ENCODE measurements at regions of chr11 and their contacts with region 1.

Region 1: GRCh38 chr11:58006940-58007339 is 16.7 kb upstream of the OR9Q1 start:
- DNase-seq: peak; percentile 76
- H3K4me3 ChIP-seq: no peak overlapping the region
- H3K27ac ChIP-seq: peak overlapping the region; percentile 33
- H3K4me1 ChIP-seq: peaks cover 48% of the 10 kb centered on the region
- H3K27me3 ChIP-seq: no peaks in the 10 kb centered on the region
- CTCF ChIP-seq: no peak
- POLR2A ChIP-seq: no peak

Region 2: GRCh38 chr11:57667736-57668435 is 339.1 kb before region 1 on chr11 and contains the start of gene ZDHHC5:
- CTCF ChIA-PET with region 1: no interaction called
- POLR2A ChIA-PET with region 1: no interaction called
- dilution Hi-C with region 1: no loop called
- intact Hi-C with region 1: loop called (anchors 5 kb)
- DNase-seq: peak; percentile 100
- H3K4me3 ChIP-seq: peak within 1 kb of the TSS; percentile 67 to 95 (median 77)
- H3K27ac ChIP-seq: peak within 1 kb of the TSS; percentile 98
- H3K4me1 ChIP-seq: peaks cover 15% of the 10 kb centered on the region
- H3K27me3 ChIP-seq: no peaks in the 10 kb centered on the region
- CTCF ChIP-seq: peak; percentile 53 to 56
- POLR2A ChIP-seq: peak; percentile 93
- total RNA-seq, gene ZDHHC5: 67.4 and 74.0 TPM in 2 replicates

Region 3: DNA sequence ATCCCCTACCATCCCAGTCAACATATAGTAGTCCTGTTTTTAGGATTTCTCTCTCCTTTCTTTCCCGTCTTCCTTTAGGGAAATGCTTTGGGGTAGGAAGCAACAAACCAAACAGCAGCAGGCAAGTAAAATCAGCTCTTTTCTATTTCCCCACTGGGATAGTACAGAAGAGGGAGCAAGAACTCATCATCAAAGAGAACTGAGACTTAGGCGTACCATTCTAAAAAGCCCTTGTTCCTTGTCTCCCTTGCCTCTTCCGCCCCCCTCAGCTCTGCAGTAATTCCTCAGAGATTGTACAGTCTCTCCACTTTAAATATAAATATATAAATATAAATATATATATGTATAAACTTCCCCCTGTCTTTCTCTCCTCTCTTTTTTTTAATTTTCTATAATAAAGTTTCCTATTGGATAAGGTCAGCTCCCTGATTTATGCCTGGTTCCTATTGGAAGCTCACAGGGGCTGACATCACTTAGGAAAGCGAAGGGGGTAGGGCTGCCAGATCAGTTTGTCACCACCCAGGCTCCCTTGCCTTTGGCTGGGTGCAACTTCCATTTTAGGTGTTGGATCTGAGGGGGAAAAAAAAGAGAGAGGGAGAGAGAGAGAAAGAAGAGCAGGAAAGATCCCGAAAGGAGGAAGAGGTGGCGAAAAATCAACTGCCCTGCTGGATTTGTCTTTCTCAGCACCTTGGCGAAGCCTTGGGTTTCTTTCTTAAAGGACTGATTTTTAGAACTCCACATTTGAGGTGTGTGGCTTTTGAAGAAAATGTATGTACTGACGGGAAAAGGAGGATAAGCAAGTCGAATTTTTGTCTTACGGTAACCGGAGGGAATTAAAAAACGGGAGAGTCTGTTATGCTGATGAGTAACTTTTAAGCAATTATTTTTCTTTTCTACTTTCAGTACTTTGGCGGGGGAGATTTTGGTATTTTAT is 245.4 kb before region 1 on chr11 and contains the start of gene CTNND1:
- CTCF ChIA-PET with region 1: no interaction called
- POLR2A ChIA-PET with region 1: no interaction called
- dilution Hi-C with region 1: no loop called
- intact Hi-C with region 1: loop called (anchors 5 kb)
- DNase-seq: peak; percentile 97
- H3K4me3 ChIP-seq: peak within 1 kb of the TSS; percentile 68 to 98 (median 83)
- H3K27ac ChIP-seq: peak within 1 kb of the TSS; percentile 89
- H3K4me1 ChIP-seq: peaks cover 26% of the 10 kb centered on the region
- H3K27me3 ChIP-seq: no peaks in the 10 kb centered on the region
- CTCF ChIP-seq: no peak
- POLR2A ChIP-seq: peak; percentile 80
- total RNA-seq, gene CTNND1: 268 and 285 TPM in 2 replicates

Region 4: GRCh38 chr11:57842873-57843272 is 164.1 kb before region 1 on chr11:
- CTCF ChIA-PET with region 1: no interaction called
- POLR2A ChIA-PET with region 1: no interaction called
- dilution Hi-C with region 1: no loop called
- intact Hi-C with region 1: loop called (anchors 1 kb)
- DNase-seq: peak; percentile 32
- H3K4me3 ChIP-seq: no peak overlapping the region
- H3K27ac ChIP-seq: no peak overlapping the region
- H3K4me1 ChIP-seq: no peaks in the 10 kb centered on the region
- H3K27me3 ChIP-seq: peaks cover 4 to 5% of the 10 kb centered on the region in 2 experiments
- CTCF ChIP-seq: no peak
- POLR2A ChIP-seq: no peak

Region 5: GRCh38 chr11:58059007-58059350 is 52.0 kb after region 1 on chr11:
- CTCF ChIA-PET with region 1: interaction called, 6 read pairs
- POLR2A ChIA-PET with region 1: no interaction called
- dilution Hi-C with region 1: no loop called
- intact Hi-C with region 1: loop called (anchors 1 kb)
- DNase-seq: peak; percentile 88
- H3K4me3 ChIP-seq: no peak overlapping the region
- H3K27ac ChIP-seq: peak overlapping the region; percentile 88
- H3K4me1 ChIP-seq: peaks cover 16% of the 10 kb centered on the region
- H3K27me3 ChIP-seq: no peaks in the 10 kb centered on the region
- CTCF ChIP-seq: no peak
- POLR2A ChIP-seq: no peak

Region 6: GRCh38 chr11:58394195-58394594 is 387.3 kb after region 1 on chr11:
- CTCF ChIA-PET with region 1: no interaction called
- POLR2A ChIA-PET with region 1: no interaction called
- dilution Hi-C with region 1: no loop called
- intact Hi-C with region 1: loop called (anchors 1 kb)
- DNase-seq: peak; percentile 79
- H3K4me3 ChIP-seq: no peak overlapping the region
- H3K27ac ChIP-seq: peak overlapping the region; percentile 78
- H3K4me1 ChIP-seq: peaks cover 18% of the 10 kb centered on the region
- H3K27me3 ChIP-seq: no peaks in the 10 kb centered on the region
- CTCF ChIP-seq: no peak
- POLR2A ChIP-seq: no peak

Region 7: GRCh38 chr11:58579192-58580129 is 572.5 kb after region 1 on chr11:
- CTCF ChIA-PET with region 1: no interaction called
- POLR2A ChIA-PET with region 1: no interaction called
- dilution Hi-C with region 1: no loop called
- intact Hi-C with region 1: loop called (anchors 2 kb)
- DNase-seq: peak; percentile 88
- H3K4me3 ChIP-seq: peak overlapping the region; percentile 59 to 92 (median 76)
- H3K27ac ChIP-seq: peak overlapping the region; percentile 95
- H3K4me1 ChIP-seq: peaks cover 38% of the 10 kb centered on the region
- H3K27me3 ChIP-seq: no peaks in the 10 kb centered on the region
- CTCF ChIP-seq: peak; percentile 84 to 92
- POLR2A ChIP-seq: peak; percentile 97

Measured in endothelial cell of umbilical vein (primary cell).